BJ (cell line): ENCODE measurements at regions of chr9 and their contacts with region 1.

Region 1: DNA sequence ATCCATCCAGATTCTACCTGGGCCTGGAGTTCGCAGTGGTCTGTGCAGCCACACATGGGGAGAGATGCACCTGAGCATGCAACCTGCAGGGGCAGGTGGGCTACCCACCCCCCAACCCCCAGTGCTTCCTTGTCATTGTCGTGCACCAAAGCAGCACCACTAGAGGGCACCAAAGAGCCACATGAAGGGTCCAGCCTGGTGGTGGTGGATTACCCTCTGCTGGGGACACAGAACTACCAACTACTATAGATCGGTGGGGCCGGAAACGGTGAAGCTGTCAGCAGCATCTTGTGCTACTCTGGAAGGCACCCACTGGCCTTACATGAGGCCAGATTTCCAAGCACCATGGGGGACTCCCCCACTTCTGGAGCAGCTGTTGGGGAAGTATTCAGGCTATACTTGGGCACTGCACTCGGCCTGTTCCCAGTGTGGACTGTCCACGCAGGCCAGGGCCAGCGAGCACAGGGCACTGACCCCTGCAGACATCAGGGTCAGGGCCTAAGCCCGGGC is 60.2 kb upstream of the TBC1D2 start:
- DNase-seq: no peak
- H3K4me3 ChIP-seq: no peak overlapping the region
- H3K27me3 ChIP-seq: no peaks in the 10 kb centered on the region
- CTCF ChIP-seq: peak; percentile 96

Region 2: GRCh38 chr9:97559111-97559514 is 756.5 kb before region 1 on chr9:
- CTCF ChIA-PET with region 1: no interaction called
- POLR2A ChIA-PET with region 1: no interaction called
- DNase-seq: no peak
- H3K4me3 ChIP-seq: no peak overlapping the region
- H3K27me3 ChIP-seq: peaks cover 11% of the 10 kb centered on the region
- CTCF ChIP-seq: no peak

Region 3: GRCh38 chr9:98069551-98069950 is 246.1 kb before region 1 on chr9:
- CTCF ChIA-PET with region 1: no interaction called
- POLR2A ChIA-PET with region 1: no interaction called
- DNase-seq: no peak
- H3K4me3 ChIP-seq: no peak overlapping the region
- H3K27me3 ChIP-seq: no peaks in the 10 kb centered on the region
- CTCF ChIP-seq: no peak

Region 4: GRCh38 chr9:98192503-98193335 is 122.9 kb before region 1 on chr9 and contains the start of gene CORO2A:
- CTCF ChIA-PET with region 1: no interaction called
- POLR2A ChIA-PET with region 1: no interaction called
- DNase-seq: peak; percentile 6
- H3K4me3 ChIP-seq: peak within 1 kb of the TSS; percentile 60
- H3K27me3 ChIP-seq: no peaks in the 10 kb centered on the region; the same call in 1 of the 2 replicates
- CTCF ChIP-seq: peak; percentile 75
- polyA plus RNA-seq, gene CORO2A: 1.2 and 1.5 TPM in 2 replicates

Region 5: DNA sequence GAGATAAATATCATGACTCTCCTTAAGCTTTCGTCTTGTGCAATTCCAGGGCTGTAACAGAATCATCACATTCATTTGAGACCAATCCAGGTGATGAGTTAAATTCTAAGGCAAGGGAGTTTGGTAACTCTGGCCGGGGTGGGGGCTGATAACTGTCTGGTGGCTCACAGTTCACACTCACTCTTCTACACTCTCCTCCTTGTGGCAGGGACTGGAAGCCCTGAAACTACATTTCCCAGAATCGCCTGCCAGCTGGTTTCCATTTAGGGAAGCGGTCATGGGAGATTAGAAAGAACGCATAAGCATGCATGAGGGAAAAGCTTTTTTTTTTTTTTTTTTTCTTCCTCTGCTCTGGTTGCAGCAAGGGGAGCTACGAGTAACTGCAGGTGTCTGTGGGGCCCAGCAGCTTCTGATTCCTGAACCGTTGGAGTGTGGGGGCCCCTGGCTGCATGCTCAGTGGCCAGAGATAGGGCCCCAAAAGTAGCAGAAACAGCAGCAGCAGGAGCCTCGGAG is 94.6 kb after region 1 on chr9:
- CTCF ChIA-PET with region 1: interaction called, 10 read pairs
- POLR2A ChIA-PET with region 1: no interaction called
- DNase-seq: peak; percentile 69
- H3K4me3 ChIP-seq: no peak overlapping the region
- H3K27me3 ChIP-seq: no peaks in the 10 kb centered on the region
- CTCF ChIP-seq: peak; percentile 67

Region 6: GRCh38 chr9:98523231-98523896 is 207.8 kb after region 1 on chr9:
- CTCF ChIA-PET with region 1: interaction called, 28 read pairs
- POLR2A ChIA-PET with region 1: no interaction called
- DNase-seq: no peak
- H3K4me3 ChIP-seq: no peak overlapping the region
- H3K27me3 ChIP-seq: no peaks in the 10 kb centered on the region
- CTCF ChIP-seq: peak; percentile 64

Region 7: GRCh38 chr9:98707166-98708102 is 391.8 kb after region 1 on chr9:
- CTCF ChIA-PET with region 1: interaction called, 17 read pairs
- POLR2A ChIA-PET with region 1: no interaction called
- DNase-seq: no peak
- H3K4me3 ChIP-seq: peak overlapping the region; percentile 30; the same call in 1 of the 2 replicates
- H3K27me3 ChIP-seq: peaks cover 34% of the 10 kb centered on the region
- CTCF ChIP-seq: peak; percentile 79